K562 (cell line): ENCODE measurements at regions of chr12 and their contacts with region 1.

Region 1: GRCh38 chr12:112031472-112031871 is 18.2 kb downstream of the ERP29 start:
- DNase-seq: no peak
- ATAC-seq: no peak
- H3K4me3 ChIP-seq: no peak overlapping the region
- H3K27ac ChIP-seq: no peak overlapping the region
- H3K4me1 ChIP-seq: no peaks in the 10 kb centered on the region
- H3K27me3 ChIP-seq: no peaks in the 10 kb centered on the region
- CTCF ChIP-seq: no peak
- EP300 ChIP-seq: no peak
- POLR2A ChIP-seq: no peak
- RAD21 ChIP-seq: no peak

Region 2: GRCh38 chr12:111826316-111826715 is 205.2 kb before region 1 on chr12:
- CTCF ChIA-PET with region 1: no interaction called
- POLR2A ChIA-PET with region 1: interaction called, 4 read pairs
- in situ Hi-C with region 1: no loop called
- intact Hi-C with region 1: loop called (anchors 5 kb)
- DNase-seq: no peak
- ATAC-seq: no peak
- H3K4me3 ChIP-seq: no peak overlapping the region
- H3K27ac ChIP-seq: no peak overlapping the region
- H3K4me1 ChIP-seq: peaks cover 0 to 3% of the 10 kb centered on the region in 2 experiments; a peak in 2 of 5 replicates
- H3K27me3 ChIP-seq: peaks cover 0 to 5% of the 10 kb centered on the region in 2 experiments; a peak in 2 of 5 replicates
- CTCF ChIP-seq: no peak
- EP300 ChIP-seq: no peak
- POLR2A ChIP-seq: no peak
- RAD21 ChIP-seq: no peak

Region 3: GRCh38 chr12:111975161-111975931 is 56.1 kb before region 1 on chr12:
- CTCF ChIA-PET with region 1: no interaction called
- POLR2A ChIA-PET with region 1: no interaction called
- in situ Hi-C with region 1: no loop called
- intact Hi-C with region 1: no loop called
- DNase-seq: peak in 3 of 4 experiments; percentile 11 to 73 (median 39)
- ATAC-seq: peak; percentile 83
- H3K4me3 ChIP-seq: no peak overlapping the region
- H3K27ac ChIP-seq: peak overlapping the region; percentile 83
- H3K4me1 ChIP-seq: peaks cover 27 to 32% of the 10 kb centered on the region in 2 experiments
- H3K27me3 ChIP-seq: no peaks in the 10 kb centered on the region
- CTCF ChIP-seq: no peak
- EP300 ChIP-seq: peak; percentile 15; the same call in 1 of the 2 replicates
- POLR2A ChIP-seq: no peak
- RAD21 ChIP-seq: no peak

Region 4: GRCh38 chr12:112018571-112019237 is 12.8 kb before region 1 on chr12:
- CTCF ChIA-PET with region 1: no interaction called
- POLR2A ChIA-PET with region 1: interaction called, 28 read pairs
- in situ Hi-C with region 1: no loop called
- intact Hi-C with region 1: no loop called
- DNase-seq: no peak
- ATAC-seq: no peak
- H3K4me3 ChIP-seq: no peak overlapping the region
- H3K27ac ChIP-seq: no peak overlapping the region
- H3K4me1 ChIP-seq: peaks cover 11 to 13% of the 10 kb centered on the region in 2 experiments; a peak in 4 of 5 replicates
- H3K27me3 ChIP-seq: no peaks in the 10 kb centered on the region
- CTCF ChIP-seq: no peak
- EP300 ChIP-seq: no peak
- POLR2A ChIP-seq: no peak
- RAD21 ChIP-seq: no peak